ENCODE measurements at regions of chr2 and their contacts with region 1.

Region 1: GRCh38 chr2:210195101-210195852 is 24.1 kb upstream of the KANSL1L start:
- DNase-seq: peak in 1 of 3 donors; percentile 21
- ATAC-seq: peak; percentile 83 to 87 (median 84)
- H3K4me3 ChIP-seq: peak overlapping the region; percentile 22 to 34 (median 28)
- H3K27ac ChIP-seq: peak overlapping the region in 2 of 3 donors; percentile 8 to 26
- H3K4me1 ChIP-seq: peaks cover 0 to 15% (median 7%) of the 10 kb centered on the region in 4 donors
- H3K27me3 ChIP-seq: no peaks in the 10 kb centered on the region
- CTCF ChIP-seq: peak; percentile 74 to 77 (median 74)
- POLR2A ChIP-seq: no peak

Region 2: GRCh38 chr2:209977386-209978239 is 217.7 kb before region 1 on chr2:
- intact Hi-C with region 1: loop called (anchors 5 to 10 kb)
- DNase-seq: no peak
- ATAC-seq: peak; percentile 57 to 77 (median 74)
- H3K4me3 ChIP-seq: no peak overlapping the region
- H3K27ac ChIP-seq: no peak overlapping the region
- H3K4me1 ChIP-seq: no peaks in the 10 kb centered on the region
- H3K27me3 ChIP-seq: no peaks in the 10 kb centered on the region
- CTCF ChIP-seq: peak; percentile 54 to 70 (median 63)
- POLR2A ChIP-seq: no peak

Region 3: DNA sequence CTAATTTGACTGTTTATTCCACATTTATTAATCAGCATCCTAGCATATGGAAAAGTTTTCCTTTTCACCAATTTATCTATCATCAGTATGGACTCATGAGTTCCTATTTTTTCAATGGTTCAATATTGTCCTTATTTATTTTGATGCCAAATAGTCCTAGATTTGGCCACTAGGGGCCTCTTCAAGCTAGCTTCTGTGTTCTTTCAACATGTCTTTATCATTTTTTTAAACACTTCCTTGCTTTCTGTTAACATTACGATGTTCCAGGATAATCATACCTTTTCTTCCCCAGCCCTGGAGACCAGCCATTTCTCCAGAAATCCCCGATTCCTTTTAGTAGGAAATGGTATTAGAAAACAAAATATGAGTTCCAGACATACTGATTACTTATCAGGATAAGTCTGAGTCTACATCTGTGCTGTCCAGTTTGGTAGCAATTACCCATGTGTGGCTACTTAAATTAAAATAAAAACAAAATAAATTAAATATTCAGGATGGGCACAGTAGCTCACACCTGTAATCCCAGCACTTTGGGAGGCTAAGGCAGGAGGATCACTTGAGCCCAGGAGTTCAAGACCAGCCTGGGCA is 122.3 kb before region 1 on chr2:
- intact Hi-C with region 1: loop called in 1 of 2 experiments (anchors 10 kb)
- DNase-seq: no peak
- ATAC-seq: peak; percentile 83 to 96 (median 85)
- H3K4me3 ChIP-seq: no peak overlapping the region
- H3K27ac ChIP-seq: no peak overlapping the region
- H3K4me1 ChIP-seq: no peaks in the 10 kb centered on the region
- H3K27me3 ChIP-seq: no peaks in the 10 kb centered on the region
- CTCF ChIP-seq: peak; percentile 67 to 77 (median 72)
- POLR2A ChIP-seq: no peak

Region 4: GRCh38 chr2:211228559-211228958 is 1033.3 kb after region 1 on chr2:
- intact Hi-C with region 1: no loop called
- DNase-seq: no peak
- ATAC-seq: peak in 1 of 4 donors; percentile 59
- H3K4me3 ChIP-seq: no peak overlapping the region
- H3K27ac ChIP-seq: no peak overlapping the region
- H3K4me1 ChIP-seq: no peaks in the 10 kb centered on the region
- H3K27me3 ChIP-seq: no peaks in the 10 kb centered on the region
- CTCF ChIP-seq: no peak
- POLR2A ChIP-seq: no peak